CD8-positive, alpha-beta T cell (primary cell): ENCODE measurements at regions of chr15 and their contacts with region 1.

Region 1: GRCh38 chr15:40217159-40217824 is 21.6 kb upstream of the PAK6 start:
- DNase-seq: peak in 7 of 9 experiments; percentile 21 to 84 (median 36)
- ATAC-seq: peak; percentile 98
- H3K4me3 ChIP-seq: no peak overlapping the region
- H3K4me3 Mint-ChIP-seq: no peak overlapping the region
- H3K27ac ChIP-seq: no peak overlapping the region
- H3K27ac Mint-ChIP-seq: no peak overlapping the region
- H3K4me1 ChIP-seq: no peaks in the 10 kb centered on the region
- H3K4me1 Mint-ChIP-seq: no peaks in the 10 kb centered on the region
- H3K27me3 ChIP-seq: no peaks in the 10 kb centered on the region
- H3K27me3 Mint-ChIP-seq: no peaks in the 10 kb centered on the region
- CTCF ChIP-seq: peak; percentile 81

Region 2: GRCh38 chr15:40044717-40045571 is 172.3 kb before region 1 on chr15:
- CTCF ChIA-PET with region 1: interaction called, 14 read pairs
- POLR2A ChIA-PET with region 1: no interaction called
- intact Hi-C with region 1: loop called (anchors 1 kb)
- DNase-seq: peak; percentile 58 to 91 (median 80)
- ATAC-seq: peak; percentile 89
- H3K4me3 ChIP-seq: no peak overlapping the region
- H3K4me3 Mint-ChIP-seq: peak overlapping the region; percentile 12
- H3K27ac ChIP-seq: no peak overlapping the region
- H3K27ac Mint-ChIP-seq: no peak overlapping the region
- H3K4me1 ChIP-seq: peaks cover 46% of the 10 kb centered on the region
- H3K4me1 Mint-ChIP-seq: peaks cover 55% of the 10 kb centered on the region
- H3K27me3 ChIP-seq: no peaks in the 10 kb centered on the region
- H3K27me3 Mint-ChIP-seq: no peaks in the 10 kb centered on the region
- CTCF ChIP-seq: peak; percentile 90

Region 3: DNA sequence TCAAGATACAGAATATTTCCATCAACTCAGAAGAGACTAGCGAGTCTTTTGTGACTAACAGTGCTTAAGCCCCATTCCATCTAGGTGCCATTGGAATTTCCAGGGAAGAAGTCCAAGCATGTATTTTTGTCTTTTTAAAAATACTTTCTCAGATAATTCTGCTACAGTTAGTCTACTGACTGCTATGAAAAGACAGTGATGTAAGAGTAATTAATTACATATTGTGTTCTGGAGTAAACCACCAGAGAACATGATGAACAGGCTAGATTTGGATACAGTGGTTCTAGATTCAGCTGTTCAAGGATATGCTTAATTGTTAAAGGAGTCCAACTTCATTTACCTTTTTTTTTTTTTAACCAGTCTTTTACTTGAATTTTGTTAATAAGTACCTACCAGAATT is 13.2 kb before region 1 on chr15:
- CTCF ChIA-PET with region 1: interaction called, 18 read pairs
- POLR2A ChIA-PET with region 1: interaction called, 3 read pairs
- intact Hi-C with region 1: no loop called
- DNase-seq: no peak
- ATAC-seq: no peak
- H3K4me3 ChIP-seq: no peak overlapping the region
- H3K4me3 Mint-ChIP-seq: no peak overlapping the region
- H3K27ac ChIP-seq: no peak overlapping the region
- H3K27ac Mint-ChIP-seq: no peak overlapping the region
- H3K4me1 ChIP-seq: no peaks in the 10 kb centered on the region
- H3K4me1 Mint-ChIP-seq: peaks cover under 1% of the 10 kb centered on the region
- H3K27me3 ChIP-seq: no peaks in the 10 kb centered on the region
- H3K27me3 Mint-ChIP-seq: no peaks in the 10 kb centered on the region
- CTCF ChIP-seq: no peak

Region 4: DNA sequence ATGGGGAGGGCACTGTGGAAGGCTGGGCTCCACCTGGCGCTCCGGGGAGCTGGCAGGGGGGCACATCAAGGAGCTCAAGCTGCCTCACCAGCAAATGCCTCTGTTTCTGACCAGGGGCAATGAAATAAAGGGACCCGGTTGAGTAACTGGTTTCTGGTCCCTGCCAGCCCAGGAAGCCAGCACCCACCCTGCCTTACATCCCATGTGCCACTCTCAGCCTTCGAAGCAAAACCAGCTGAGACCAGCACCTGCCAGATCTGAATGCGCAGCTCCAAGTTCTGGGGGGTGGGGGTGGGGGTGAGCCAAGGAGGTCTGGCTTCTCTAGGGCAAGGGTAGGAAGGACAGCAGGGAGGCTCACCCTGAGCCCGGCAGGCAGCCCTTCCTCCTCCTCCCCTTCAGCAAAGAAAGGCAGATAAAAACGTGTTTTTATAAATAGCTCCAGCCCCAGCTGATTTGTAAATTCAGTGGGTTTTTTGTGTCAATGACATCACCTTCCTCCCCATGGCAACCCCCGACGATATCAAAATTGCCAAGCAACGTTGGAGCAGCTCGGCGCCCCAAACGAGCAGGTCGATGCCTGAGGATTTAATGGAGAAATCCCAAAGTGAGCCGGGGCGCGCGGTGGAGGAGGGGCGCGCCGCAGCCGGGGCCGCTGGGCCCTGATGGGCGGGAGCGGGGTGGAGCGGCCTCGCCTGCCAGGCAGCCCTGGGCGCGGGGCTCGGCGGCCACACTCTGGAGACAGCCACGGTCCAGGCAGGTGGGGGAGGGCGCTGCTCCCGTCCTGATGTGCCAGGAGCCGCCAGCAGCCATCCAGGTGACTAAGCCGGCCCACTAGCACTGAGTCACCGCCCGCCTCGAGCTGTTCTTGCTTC is 21.5 kb after region 1 on chr15 and contains the start of gene PAK6:
- CTCF ChIA-PET with region 1: interaction called, 11 read pairs
- POLR2A ChIA-PET with region 1: no interaction called
- intact Hi-C with region 1: no loop called
- DNase-seq: peak in 4 of 9 experiments; percentile 34 to 46 (median 38)
- ATAC-seq: peak; percentile 58
- H3K4me3 ChIP-seq: no peak within 1 kb of the TSS
- H3K4me3 Mint-ChIP-seq: peak within 1 kb of the TSS; percentile 32
- H3K27ac ChIP-seq: no peak within 1 kb of the TSS
- H3K27ac Mint-ChIP-seq: no peak within 1 kb of the TSS
- H3K4me1 ChIP-seq: no peaks in the 10 kb centered on the region
- H3K4me1 Mint-ChIP-seq: peaks cover 10% of the 10 kb centered on the region
- H3K27me3 ChIP-seq: peaks cover 4 to 8% of the 10 kb centered on the region in 2 experiments
- H3K27me3 Mint-ChIP-seq: peaks cover 21% of the 10 kb centered on the region
- CTCF ChIP-seq: no peak
- total RNA-seq, gene PAK6: 0.64 to 1.1 TPM

Region 5: DNA sequence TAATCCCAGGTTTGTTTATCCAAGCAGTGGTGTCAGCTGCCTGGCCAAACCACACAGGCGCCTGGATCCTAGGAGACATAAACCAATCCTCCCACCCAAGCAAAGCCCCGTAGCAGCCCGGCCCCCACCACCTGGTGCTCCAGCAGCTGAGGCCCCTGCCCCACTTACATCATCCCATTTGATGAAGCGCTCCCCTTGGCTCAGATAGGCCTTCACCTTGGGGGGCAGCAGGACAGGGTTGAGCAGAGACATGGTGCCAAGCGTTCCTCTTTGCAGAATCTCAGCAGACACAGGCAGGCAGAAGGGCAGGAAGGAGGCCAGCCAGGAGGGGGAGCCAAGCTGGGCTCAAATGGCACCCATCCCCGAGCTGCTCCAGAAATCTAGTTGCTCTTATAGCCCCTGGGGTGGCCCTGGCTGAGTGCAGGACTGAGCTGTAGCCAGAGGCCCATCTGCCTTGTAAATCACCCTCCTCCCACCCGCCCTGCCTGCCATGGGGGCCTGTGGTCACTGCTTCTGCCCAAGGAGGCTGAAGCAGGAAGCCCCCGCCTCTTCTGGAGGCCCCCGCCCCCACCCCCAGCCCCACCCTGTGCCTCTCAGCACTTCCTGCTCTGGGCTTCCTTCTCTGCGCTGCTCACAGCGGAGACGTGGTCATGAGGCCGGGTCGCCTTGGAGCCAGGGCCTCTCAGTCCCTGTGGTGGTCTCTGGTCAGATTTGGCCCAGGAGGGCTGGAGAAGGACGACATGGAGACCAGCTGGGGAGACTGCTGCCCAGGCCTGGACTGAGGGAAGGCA is 90.3 kb after region 1 on chr15 and contains the start of gene PLCB2:
- CTCF ChIA-PET with region 1: interaction called, 16 read pairs
- POLR2A ChIA-PET with region 1: no interaction called
- intact Hi-C with region 1: loop called in 1 of 2 experiments (anchors 2 kb)
- DNase-seq: peak; percentile 45 to 86 (median 72)
- ATAC-seq: peak; percentile 76
- H3K4me3 ChIP-seq: peak within 1 kb of the TSS; percentile 92 to 97
- H3K4me3 Mint-ChIP-seq: peak within 1 kb of the TSS; percentile 95
- H3K27ac ChIP-seq: peak within 1 kb of the TSS; percentile 76 to 87
- H3K27ac Mint-ChIP-seq: peak within 1 kb of the TSS; percentile 96
- H3K4me1 ChIP-seq: peaks cover 31% of the 10 kb centered on the region
- H3K4me1 Mint-ChIP-seq: peaks cover 46% of the 10 kb centered on the region
- H3K27me3 ChIP-seq: no peaks in the 10 kb centered on the region
- H3K27me3 Mint-ChIP-seq: no peaks in the 10 kb centered on the region
- CTCF ChIP-seq: peak; percentile 57
- total RNA-seq, gene PLCB2: 154 to 167 TPM

Region 6: GRCh38 chr15:40313531-40314398 is 96.5 kb after region 1 on chr15:
- CTCF ChIA-PET with region 1: interaction called, 16 read pairs
- POLR2A ChIA-PET with region 1: no interaction called
- intact Hi-C with region 1: loop called in 1 of 2 experiments (anchors 1 kb)
- DNase-seq: peak in 7 of 9 experiments; percentile 40 to 89 (median 74)
- ATAC-seq: peak; percentile 77
- H3K4me3 ChIP-seq: no peak overlapping the region
- H3K4me3 Mint-ChIP-seq: peak overlapping the region; percentile 49
- H3K27ac ChIP-seq: peak overlapping the region; percentile 24 to 58
- H3K27ac Mint-ChIP-seq: peak overlapping the region; percentile 85
- H3K4me1 ChIP-seq: peaks cover 25% of the 10 kb centered on the region
- H3K4me1 Mint-ChIP-seq: peaks cover 34% of the 10 kb centered on the region
- H3K27me3 ChIP-seq: no peaks in the 10 kb centered on the region
- H3K27me3 Mint-ChIP-seq: no peaks in the 10 kb centered on the region
- CTCF ChIP-seq: no peak

Region 7: GRCh38 chr15:40421246-40422157 is 204.2 kb after region 1 on chr15:
- CTCF ChIA-PET with region 1: interaction called, 9 read pairs
- POLR2A ChIA-PET with region 1: no interaction called
- intact Hi-C with region 1: loop called in 1 of 2 experiments (anchors 1 kb)
- DNase-seq: peak; percentile 65 to 89 (median 80)
- ATAC-seq: peak; percentile 99
- H3K4me3 ChIP-seq: no peak overlapping the region
- H3K4me3 Mint-ChIP-seq: no peak overlapping the region
- H3K27ac ChIP-seq: no peak overlapping the region
- H3K27ac Mint-ChIP-seq: no peak overlapping the region
- H3K4me1 ChIP-seq: peaks cover 6% of the 10 kb centered on the region
- H3K4me1 Mint-ChIP-seq: no peaks in the 10 kb centered on the region
- H3K27me3 ChIP-seq: no peaks in the 10 kb centered on the region
- H3K27me3 Mint-ChIP-seq: no peaks in the 10 kb centered on the region
- CTCF ChIP-seq: peak; percentile 80